ENCODE measurements at regions of chr7 and their contacts with region 1.

Region 1: DNA sequence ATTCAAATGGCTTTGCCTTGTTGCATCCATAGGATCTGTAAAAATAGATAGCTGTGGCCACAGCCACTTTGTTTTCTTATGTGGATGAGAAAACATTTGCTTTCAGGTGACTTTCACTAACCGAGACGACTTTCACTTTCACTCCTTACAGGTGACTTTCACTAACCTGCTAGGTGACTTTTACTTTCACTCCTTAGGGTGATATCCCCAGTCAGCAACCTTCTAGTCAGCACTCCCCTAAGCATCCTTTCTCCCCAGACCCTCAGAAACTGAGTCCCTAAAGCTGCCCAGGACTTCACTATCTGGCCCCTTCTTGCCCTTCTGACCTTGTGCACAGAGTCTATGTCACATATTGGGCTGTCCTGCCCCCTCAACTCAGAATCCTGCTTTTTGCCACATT is 177.5 kb downstream of the RELN start:
- DNase-seq: no peak
- H3K4me3 ChIP-seq: no peak overlapping the region
- CTCF ChIP-seq: no peak

Region 2: GRCh38 chr7:103764901-103765300 is 47.1 kb before region 1 on chr7:
- in situ Hi-C with region 1: loop called (anchors 5 kb)
- DNase-seq: no peak
- H3K4me3 ChIP-seq: no peak overlapping the region
- CTCF ChIP-seq: no peak